PC-9 (cell line): ENCODE measurements at regions of chr10 and their contacts with region 1.

Region 1: GRCh38 chr10:110311357-110311949 is 6.7 kb upstream of the SMNDC1 start:
- DNase-seq: peak; percentile 23 to 47
- H3K4me3 ChIP-seq: no peak overlapping the region
- H3K27ac ChIP-seq: peak overlapping the region; percentile 45
- H3K4me1 ChIP-seq: peaks cover 27% of the 10 kb centered on the region
- H3K27me3 ChIP-seq: no peaks in the 10 kb centered on the region
- CTCF ChIP-seq: peak; percentile 76

Region 2: GRCh38 chr10:110547139-110547761 is 235.8 kb after region 1 on chr10:
- CTCF ChIA-PET with region 1: interaction called, 3 read pairs
- POLR2A ChIA-PET with region 1: no interaction called
- intact Hi-C with region 1: loop called (anchors 1 kb)
- DNase-seq: no peak
- H3K4me3 ChIP-seq: no peak overlapping the region
- H3K27ac ChIP-seq: no peak overlapping the region
- H3K4me1 ChIP-seq: no peaks in the 10 kb centered on the region
- H3K27me3 ChIP-seq: no peaks in the 10 kb centered on the region
- CTCF ChIP-seq: peak; percentile 83